BJ (cell line): ENCODE measurements at regions of chr18 and their contacts with region 1.

Region 1: GRCh38 chr18:34661464-34662111 is 48.5 kb upstream of the DTNA start:
- DNase-seq: no peak
- H3K4me3 ChIP-seq: no peak overlapping the region
- H3K27me3 ChIP-seq: no peaks in the 10 kb centered on the region
- CTCF ChIP-seq: peak; percentile 83

Region 2: DNA sequence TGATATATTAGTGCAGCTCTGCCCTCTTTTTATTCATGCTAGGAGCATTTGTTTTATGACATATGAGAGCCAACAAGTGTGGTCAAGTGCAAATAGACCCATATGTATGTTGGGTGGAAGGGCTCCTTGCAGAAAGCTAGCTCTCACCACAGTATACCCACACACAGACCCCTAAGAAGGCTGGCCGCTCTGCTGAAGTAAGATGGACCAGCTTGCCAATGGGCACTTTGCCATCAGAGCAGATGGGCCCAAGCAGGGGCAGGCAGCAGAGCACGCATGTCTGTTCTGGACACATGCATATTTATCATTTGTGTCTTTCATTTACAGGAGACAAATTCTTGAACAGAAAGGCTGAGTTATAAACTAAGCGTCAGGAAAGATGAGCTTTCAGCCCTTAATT is 139.0 kb before region 1 on chr18:
- CTCF ChIA-PET with region 1: no interaction called
- POLR2A ChIA-PET with region 1: no interaction called
- DNase-seq: no peak
- H3K4me3 ChIP-seq: no peak overlapping the region
- H3K27me3 ChIP-seq: no peaks in the 10 kb centered on the region
- CTCF ChIP-seq: no peak

Region 3: GRCh38 chr18:34650121-34650545 is 11.5 kb before region 1 on chr18:
- CTCF ChIA-PET with region 1: interaction called, 32 read pairs
- POLR2A ChIA-PET with region 1: no interaction called
- DNase-seq: peak; percentile 65
- H3K4me3 ChIP-seq: no peak overlapping the region
- H3K27me3 ChIP-seq: no peaks in the 10 kb centered on the region
- CTCF ChIP-seq: no peak

Region 4: GRCh38 chr18:34694591-34695165 is 33.1 kb after region 1 on chr18:
- CTCF ChIA-PET with region 1: interaction called, 12 read pairs
- POLR2A ChIA-PET with region 1: no interaction called
- DNase-seq: no peak
- H3K4me3 ChIP-seq: no peak overlapping the region
- H3K27me3 ChIP-seq: no peaks in the 10 kb centered on the region; the same call in 1 of the 2 replicates
- CTCF ChIP-seq: no peak

Region 5: DNA sequence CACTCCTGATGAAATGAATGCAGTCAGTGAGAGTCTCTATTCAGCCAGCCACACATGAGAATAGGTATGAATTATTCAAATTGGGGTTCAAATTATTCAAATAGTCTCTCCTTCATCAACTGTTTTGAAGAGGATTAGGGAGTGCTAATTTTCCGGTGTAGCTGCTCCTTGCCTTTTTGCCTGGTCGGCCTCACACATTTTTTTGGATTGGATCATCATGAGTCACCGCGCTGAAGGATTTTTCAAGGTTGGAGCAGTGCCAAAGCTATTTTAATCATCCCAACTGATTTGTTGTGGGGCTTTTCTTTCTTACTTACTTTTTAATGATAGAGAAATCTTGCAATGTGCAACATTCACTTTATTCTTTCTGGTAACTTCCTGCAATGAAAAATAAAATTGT is 46.1 kb after region 1 on chr18:
- CTCF ChIA-PET with region 1: interaction called, 53 read pairs
- POLR2A ChIA-PET with region 1: no interaction called
- DNase-seq: peak; percentile 58
- H3K4me3 ChIP-seq: no peak overlapping the region
- H3K27me3 ChIP-seq: no peaks in the 10 kb centered on the region
- CTCF ChIP-seq: no peak

Region 6: GRCh38 chr18:34729264-34729663 is 67.7 kb after region 1 on chr18:
- CTCF ChIA-PET with region 1: interaction called, 23 read pairs
- POLR2A ChIA-PET with region 1: no interaction called
- DNase-seq: no peak
- H3K4me3 ChIP-seq: no peak overlapping the region
- H3K27me3 ChIP-seq: no peaks in the 10 kb centered on the region
- CTCF ChIP-seq: peak; percentile 60

Region 7: DNA sequence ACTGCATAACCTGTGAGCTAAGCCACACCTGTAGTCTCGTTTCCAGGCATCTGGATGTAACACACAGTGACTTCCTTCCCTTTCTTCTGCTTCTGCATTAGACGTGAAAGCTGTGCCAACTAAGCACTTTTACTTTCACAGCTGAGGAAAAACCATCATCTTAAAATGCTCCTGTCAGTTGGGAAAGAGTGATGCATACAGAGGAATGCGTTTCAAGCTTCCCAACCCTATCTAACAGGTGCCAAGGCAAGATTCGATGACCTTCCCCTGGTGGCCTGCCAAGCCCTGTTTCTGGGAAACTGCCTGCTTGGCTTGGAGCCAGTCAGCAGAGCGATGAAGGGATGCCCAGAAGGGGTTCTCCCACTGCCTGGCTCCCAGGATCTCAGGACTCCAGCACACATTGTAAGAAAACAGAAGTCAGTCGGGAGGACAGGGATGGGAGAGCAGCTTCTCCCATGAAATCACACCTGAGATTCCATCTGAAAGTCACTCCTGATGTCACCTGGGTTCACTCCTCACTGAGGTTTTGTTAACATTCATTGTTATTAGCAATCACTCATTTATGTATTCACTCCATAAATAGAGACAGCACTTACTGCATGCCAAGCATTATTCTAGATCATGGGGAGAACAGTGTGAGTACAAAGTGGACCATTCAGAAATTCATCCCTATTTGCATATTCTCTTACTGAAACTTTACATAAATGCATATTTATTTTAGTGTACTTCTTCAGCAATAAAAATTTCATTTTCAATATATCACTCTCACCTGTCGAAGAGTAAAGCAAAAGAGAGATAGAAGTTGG is 112.6 kb after region 1 on chr18:
- CTCF ChIA-PET with region 1: interaction called, 180 read pairs
- POLR2A ChIA-PET with region 1: no interaction called
- DNase-seq: no peak
- H3K4me3 ChIP-seq: no peak overlapping the region
- H3K27me3 ChIP-seq: no peaks in the 10 kb centered on the region
- CTCF ChIP-seq: no peak

Region 8: DNA sequence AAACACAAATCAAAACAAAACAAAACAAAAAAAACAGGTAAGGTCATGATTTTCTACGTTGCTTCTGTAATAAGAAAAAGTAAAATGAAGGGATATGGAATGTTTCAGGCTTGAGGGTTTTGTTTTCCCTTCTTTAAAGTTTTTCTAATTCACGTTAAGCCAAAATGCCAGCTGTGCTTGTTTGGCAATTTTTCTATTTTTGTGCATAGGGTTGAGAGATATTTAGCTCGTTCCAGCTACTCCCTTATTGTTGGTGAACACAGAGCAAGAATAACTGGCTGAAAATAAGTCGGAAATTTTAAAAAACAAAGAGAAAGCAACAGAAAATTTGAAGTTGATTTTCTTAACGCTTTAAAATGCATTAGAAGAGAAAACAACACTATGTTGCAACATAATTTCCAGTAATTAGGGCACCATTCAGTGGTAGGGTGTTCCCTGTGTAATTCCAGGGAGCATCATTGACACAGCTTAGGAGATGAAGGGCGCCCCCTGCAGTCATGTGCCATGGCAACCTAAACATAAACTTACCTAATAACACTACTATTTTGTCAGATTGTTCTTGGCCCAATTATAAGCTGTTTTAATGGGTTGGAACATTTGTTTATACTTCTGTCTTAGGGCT is 148.0 kb after region 1 on chr18:
- CTCF ChIA-PET with region 1: interaction called, 11 read pairs
- POLR2A ChIA-PET with region 1: no interaction called
- DNase-seq: no peak
- H3K4me3 ChIP-seq: no peak overlapping the region
- H3K27me3 ChIP-seq: no peaks in the 10 kb centered on the region; the same call in 1 of the 2 replicates
- CTCF ChIP-seq: peak; percentile 62